Aorta (tissue), 5 donors: ENCODE measurements at regions of chr22 and their contacts with region 1.

Region 1: DNA sequence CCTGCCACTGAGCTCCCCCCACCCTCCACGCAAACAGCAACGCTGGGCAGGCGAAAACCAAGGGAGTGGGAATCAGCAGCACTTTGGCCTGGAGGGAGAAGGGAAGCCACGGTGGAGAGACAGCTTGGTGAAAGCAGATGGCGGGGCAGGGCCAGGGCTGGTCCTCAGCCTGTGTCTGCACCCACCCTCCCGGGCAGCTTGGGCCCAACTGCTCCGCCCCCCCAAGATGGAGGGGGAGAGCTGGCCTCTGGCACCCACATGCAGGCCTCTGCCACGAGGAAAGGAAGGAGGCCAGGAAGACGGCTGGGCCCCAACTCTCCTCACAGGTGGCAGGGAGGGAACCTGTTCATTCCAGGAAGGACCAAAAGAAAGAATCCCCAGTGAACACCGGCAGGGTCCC is 17.8 kb downstream of the MAFF start:
- DNase-seq: no peak
- ATAC-seq: no peak
- H3K4me3 ChIP-seq: no peak overlapping the region
- H3K27ac ChIP-seq: peak overlapping the region; percentile 33 to 58
- H3K4me1 ChIP-seq: no peaks in the 10 kb centered on the region
- H3K27me3 ChIP-seq: no peaks in the 10 kb centered on the region

Region 2: DNA sequence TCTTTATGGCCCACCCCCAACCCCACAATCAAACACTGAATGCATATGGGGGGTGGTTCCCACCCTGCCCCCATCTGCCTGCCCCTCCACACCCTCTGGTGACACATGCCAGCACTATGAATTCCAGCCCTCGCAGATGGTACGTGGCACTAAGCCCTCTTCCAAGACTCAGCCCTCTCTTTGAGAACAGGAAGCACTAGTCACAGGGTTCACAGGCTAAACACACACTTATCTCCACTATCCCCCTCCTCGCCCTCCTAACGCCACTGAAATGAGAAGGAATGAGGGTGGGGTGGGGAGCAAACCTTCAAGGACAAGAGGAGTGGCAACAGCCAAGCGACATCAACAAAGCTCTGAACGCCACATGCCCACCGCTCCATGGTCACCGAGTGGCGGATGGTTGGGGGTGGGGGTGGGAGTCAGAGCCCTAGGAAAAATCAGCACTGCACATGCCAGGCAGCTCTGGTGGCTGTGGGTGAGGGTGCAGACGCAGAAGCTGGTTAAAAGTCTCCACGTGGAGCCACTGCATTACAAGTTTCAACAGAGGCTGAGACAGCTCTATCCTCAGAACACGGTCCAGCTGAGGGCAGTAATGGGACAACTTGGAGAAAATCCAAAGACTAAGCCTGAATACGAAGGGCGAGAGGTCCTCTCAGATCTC is 19.6 kb after region 1 on chr22:
- intact Hi-C with region 1: loop called in 1 of 2 experiments (anchors 2 kb)
- DNase-seq: peak in 1 of 2 donors; percentile 76
- ATAC-seq: peak; percentile 64
- H3K4me3 ChIP-seq: no peak overlapping the region
- H3K27ac ChIP-seq: peak overlapping the region in 1 of 2 donors; percentile 58
- H3K4me1 ChIP-seq: no peaks in the 10 kb centered on the region
- H3K27me3 ChIP-seq: no peaks in the 10 kb centered on the region